H1 (cell line): ENCODE measurements at regions of chr6 and their contacts with region 1.

Region 1: DNA sequence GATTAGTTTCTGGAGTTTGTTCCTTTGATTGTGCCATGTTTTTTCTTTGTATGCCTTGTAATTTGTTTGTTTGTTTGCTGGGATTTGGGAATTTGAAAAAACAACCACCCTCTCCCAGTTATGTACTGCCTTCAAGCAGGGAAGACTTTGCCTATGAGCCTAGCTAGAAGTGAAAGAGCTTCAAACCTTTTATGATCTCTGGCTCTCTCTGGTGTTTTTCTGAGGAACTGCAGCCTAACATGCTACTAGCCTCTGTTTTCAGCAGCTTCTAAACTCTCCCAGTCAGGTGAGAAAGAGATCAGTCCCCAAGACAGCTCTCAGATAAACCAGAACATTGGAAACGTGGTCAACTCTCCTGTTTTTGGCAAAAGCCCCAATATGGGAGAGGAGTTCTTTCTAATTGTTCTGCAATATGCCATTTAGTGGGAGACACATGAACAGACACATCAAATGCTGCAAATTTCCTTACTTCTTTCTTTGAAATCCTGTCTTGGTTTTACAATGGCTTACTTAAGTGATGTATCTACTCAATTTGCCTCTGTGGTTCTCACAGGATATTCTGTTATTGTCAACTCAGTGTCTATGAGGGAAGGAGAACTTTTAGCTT is 58.9 kb upstream of the SERINC1 start:
- DNase-seq: peak; percentile 15 to 59
- H3K4me3 ChIP-seq: no peak overlapping the region
- H3K27ac ChIP-seq: no peak overlapping the region
- H3K4me1 ChIP-seq: no peaks in the 10 kb centered on the region
- H3K27me3 ChIP-seq: no peaks in the 10 kb centered on the region
- CTCF ChIP-seq: peak in 2 of 3 experiments; percentile 84 to 87; a peak in 3 of 4 replicates
- EP300 ChIP-seq: no peak
- POLR2A ChIP-seq: no peak
- RAD21 ChIP-seq: peak; percentile 91 to 94

Region 2: GRCh38 chr6:122381497-122382265 is 148.9 kb before region 1 on chr6:
- CTCF ChIA-PET with region 1: interaction called, 31 read pairs
- POLR2A ChIA-PET with region 1: no interaction called
- DNase-seq: peak in 1 of 2 experiments; percentile 29
- H3K4me3 ChIP-seq: no peak overlapping the region; a peak in 1 of 8 replicates
- H3K27ac ChIP-seq: no peak overlapping the region
- H3K4me1 ChIP-seq: no peaks in the 10 kb centered on the region
- H3K27me3 ChIP-seq: peaks cover 0 to 1% (median 0%) of the 10 kb centered on the region in 4 experiments; a peak in 2 of 7 replicates
- CTCF ChIP-seq: peak; percentile 36 to 76 (median 69)
- EP300 ChIP-seq: peak in 1 of 2 experiments; percentile 75; a peak in 1 of 3 replicates
- POLR2A ChIP-seq: no peak
- RAD21 ChIP-seq: peak; percentile 76 to 78

Region 3: GRCh38 chr6:122399384-122400158 is 131.0 kb before region 1 on chr6 and contains the start of gene HSF2:
- CTCF ChIA-PET with region 1: no interaction called
- POLR2A ChIA-PET with region 1: no interaction called
- DNase-seq: peak; percentile 85 to 95
- H3K4me3 ChIP-seq: peak within 1 kb of the TSS; percentile 85 to 99 (median 96)
- H3K27ac ChIP-seq: peak within 1 kb of the TSS; percentile 64; the same call in 1 of the 2 replicates
- H3K4me1 ChIP-seq: peaks cover 0 to 4% (median 0%) of the 10 kb centered on the region in 4 experiments; a peak in 2 of 7 replicates
- H3K27me3 ChIP-seq: peaks cover 14 to 31% (median 26%) of the 10 kb centered on the region in 4 experiments
- CTCF ChIP-seq: peak in 2 of 3 experiments; percentile 13 to 28; a peak in 2 of 4 replicates
- EP300 ChIP-seq: peak in 1 of 2 experiments; percentile 4; a peak in 1 of 3 replicates
- POLR2A ChIP-seq: peak; percentile 60 to 78
- RAD21 ChIP-seq: peak in 1 of 2 experiments; percentile 12; a peak in 1 of 4 replicates
- total RNA-seq, gene HSF2: 13.7 and 16.3 TPM in 2 replicates

Region 4: DNA sequence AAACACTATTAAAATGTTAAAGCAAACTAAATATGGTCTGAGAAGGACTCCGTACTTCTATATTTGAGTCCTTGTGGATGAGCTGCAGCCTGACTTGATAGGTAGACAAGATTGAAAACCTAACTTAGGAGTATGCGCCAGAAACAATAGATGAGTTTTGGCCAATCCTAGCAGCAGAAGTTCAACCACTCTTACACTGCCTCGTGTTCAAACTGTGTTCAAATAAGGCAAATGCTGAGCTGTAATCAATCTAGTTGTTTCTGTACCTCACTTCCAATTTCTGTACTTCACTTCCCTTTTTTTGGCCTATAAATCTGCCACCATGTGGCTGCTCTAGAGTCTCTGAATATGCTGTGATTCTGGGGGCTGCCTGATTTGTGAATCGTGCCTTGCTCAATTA is 45.8 kb before region 1 on chr6:
- CTCF ChIA-PET with region 1: interaction called, 93 read pairs
- POLR2A ChIA-PET with region 1: interaction called, 4 read pairs
- DNase-seq: no peak
- H3K4me3 ChIP-seq: peak overlapping the region in 2 of 4 experiments; percentile 27 to 55; a peak in 2 of 8 replicates
- H3K27ac ChIP-seq: no peak overlapping the region
- H3K4me1 ChIP-seq: no peaks in the 10 kb centered on the region; a peak in 1 of 7 replicates
- H3K27me3 ChIP-seq: no peaks in the 10 kb centered on the region
- CTCF ChIP-seq: no peak
- EP300 ChIP-seq: no peak
- POLR2A ChIP-seq: no peak
- RAD21 ChIP-seq: no peak

Region 5: DNA sequence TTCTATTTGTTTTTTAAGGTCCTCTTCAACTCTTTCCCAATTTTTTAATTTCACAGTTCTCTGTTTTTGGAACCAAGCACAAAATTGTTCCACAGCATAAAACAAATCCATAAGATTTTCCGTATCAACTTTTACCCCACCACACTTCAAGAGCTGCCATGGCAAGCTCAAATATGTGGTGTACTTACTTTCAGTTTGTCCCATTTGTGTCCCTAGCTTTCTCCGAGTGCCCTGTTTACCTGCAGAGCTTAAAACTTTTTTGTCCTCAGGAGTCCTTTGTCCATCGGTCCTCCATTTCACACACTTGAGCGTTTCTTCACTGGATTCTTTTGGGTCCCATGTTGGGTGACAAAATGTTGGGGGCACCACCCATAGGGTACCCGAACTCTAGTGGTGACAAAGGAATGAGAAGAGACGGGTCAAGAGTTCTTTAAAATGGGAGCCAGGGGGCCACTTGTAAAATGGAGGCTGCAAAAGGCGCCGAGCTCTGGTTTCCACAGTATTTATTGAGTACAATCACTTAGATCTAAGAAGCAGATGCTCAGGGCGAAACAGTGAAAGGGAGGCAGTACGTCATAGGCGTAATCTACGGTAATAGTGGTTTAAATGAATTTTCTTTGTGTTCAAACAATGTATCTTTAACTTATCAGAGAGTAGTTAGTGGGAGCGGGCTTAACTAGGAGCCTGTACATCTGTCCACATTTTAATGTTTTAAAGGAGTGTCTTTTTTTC is 19.2 kb before region 1 on chr6:
- CTCF ChIA-PET with region 1: interaction called, 10 read pairs
- POLR2A ChIA-PET with region 1: no interaction called
- DNase-seq: no peak
- H3K4me3 ChIP-seq: no peak overlapping the region
- H3K27ac ChIP-seq: no peak overlapping the region
- H3K4me1 ChIP-seq: no peaks in the 10 kb centered on the region
- H3K27me3 ChIP-seq: no peaks in the 10 kb centered on the region
- CTCF ChIP-seq: no peak
- EP300 ChIP-seq: no peak
- POLR2A ChIP-seq: no peak
- RAD21 ChIP-seq: no peak

Region 6: GRCh38 chr6:122548281-122548680 is 17.7 kb after region 1 on chr6:
- CTCF ChIA-PET with region 1: interaction called, 14 read pairs
- POLR2A ChIA-PET with region 1: no interaction called
- DNase-seq: no peak
- H3K4me3 ChIP-seq: no peak overlapping the region
- H3K27ac ChIP-seq: no peak overlapping the region
- H3K4me1 ChIP-seq: no peaks in the 10 kb centered on the region
- H3K27me3 ChIP-seq: no peaks in the 10 kb centered on the region
- CTCF ChIP-seq: no peak
- EP300 ChIP-seq: no peak
- POLR2A ChIP-seq: no peak
- RAD21 ChIP-seq: no peak

Region 7: DNA sequence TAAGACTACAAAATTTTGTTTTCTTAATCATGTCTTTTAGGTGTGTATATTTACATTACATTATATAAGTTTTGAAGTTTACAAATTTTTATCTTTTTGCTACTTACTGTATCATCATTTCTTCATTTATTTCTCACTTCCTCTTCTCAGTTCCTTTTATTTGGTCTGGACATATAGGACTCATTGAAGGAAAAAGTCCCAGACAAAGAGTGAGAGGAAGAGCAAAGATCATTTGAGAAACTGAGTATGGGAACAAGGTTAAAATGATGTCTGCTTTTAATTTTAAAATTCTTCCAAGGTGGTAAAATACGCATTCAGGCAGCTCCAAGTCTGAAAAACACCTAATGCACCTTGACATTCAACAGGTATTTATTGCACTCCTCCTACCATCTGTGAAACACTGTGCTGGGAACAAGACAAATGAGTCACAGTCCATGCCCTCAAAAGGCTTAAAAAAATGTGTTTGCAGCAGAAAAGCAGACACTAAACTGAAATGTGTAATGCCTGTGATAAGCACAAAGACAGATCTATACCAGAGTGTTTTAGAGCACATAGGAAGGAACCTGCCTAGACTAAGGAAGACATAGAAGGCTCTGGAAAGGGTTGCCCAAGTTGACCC is 142.9 kb after region 1 on chr6:
- CTCF ChIA-PET with region 1: no interaction called
- POLR2A ChIA-PET with region 1: no interaction called
- DNase-seq: no peak
- H3K4me3 ChIP-seq: no peak overlapping the region
- H3K27ac ChIP-seq: no peak overlapping the region
- H3K4me1 ChIP-seq: no peaks in the 10 kb centered on the region
- H3K27me3 ChIP-seq: no peaks in the 10 kb centered on the region
- CTCF ChIP-seq: no peak
- EP300 ChIP-seq: no peak
- POLR2A ChIP-seq: no peak
- RAD21 ChIP-seq: no peak

Region 8: GRCh38 chr6:122829456-122829855 is 298.9 kb after region 1 on chr6:
- CTCF ChIA-PET with region 1: no interaction called
- POLR2A ChIA-PET with region 1: no interaction called
- DNase-seq: no peak
- H3K4me3 ChIP-seq: peak overlapping the region in 1 of 4 experiments; percentile 41; a peak in 2 of 8 replicates
- H3K27ac ChIP-seq: peak overlapping the region; percentile 55; the same call in 1 of the 2 replicates
- H3K4me1 ChIP-seq: peaks cover 0 to 14% (median 9%) of the 10 kb centered on the region in 4 experiments; a peak in 4 of 7 replicates
- H3K27me3 ChIP-seq: no peaks in the 10 kb centered on the region
- CTCF ChIP-seq: no peak
- EP300 ChIP-seq: peak in 1 of 2 experiments; percentile 73; a peak in 1 of 3 replicates
- POLR2A ChIP-seq: no peak
- RAD21 ChIP-seq: no peak